ENCODE measurements at regions of chr12 and their contacts with region 1.

Region 1: GRCh38 chr12:56688129-56688845 is at the start of gene PTGES3:
- DNase-seq: peak; percentile 95 to 99 (median 98)
- H3K4me3 ChIP-seq: peak within 1 kb of the TSS; percentile 80
- H3K4me3 Mint-ChIP-seq: peak within 1 kb of the TSS; percentile 93 to 100 (median 100)
- H3K27ac ChIP-seq: peak within 1 kb of the TSS; percentile 99
- H3K27ac Mint-ChIP-seq: peak within 1 kb of the TSS; percentile 96 to 100 (median 100)
- H3K4me1 ChIP-seq: peaks cover 32% of the 10 kb centered on the region
- H3K4me1 Mint-ChIP-seq: peaks cover 29 to 39% (median 36%) of the 10 kb centered on the region in 3 donors
- H3K27me3 ChIP-seq: no peaks in the 10 kb centered on the region
- H3K27me3 Mint-ChIP-seq: no peaks in the 10 kb centered on the region
- total RNA-seq, gene PTGES3: 431 to 437 TPM

Region 2: GRCh38 chr12:56271031-56271430 is 417.3 kb before region 1 on chr12:
- CTCF ChIA-PET with region 1: no interaction called
- POLR2A ChIA-PET with region 1: no interaction called
- DNase-seq: no peak
- H3K4me3 ChIP-seq: no peak overlapping the region
- H3K4me3 Mint-ChIP-seq: peak overlapping the region in 1 of 7 donors; percentile 8
- H3K27ac ChIP-seq: no peak overlapping the region
- H3K27ac Mint-ChIP-seq: peak overlapping the region in 6 of 8 donors; percentile 1 to 78 (median 63)
- H3K4me1 ChIP-seq: peaks cover 12% of the 10 kb centered on the region
- H3K4me1 Mint-ChIP-seq: peaks cover 17 to 18% (median 17%) of the 10 kb centered on the region in 3 donors
- H3K27me3 ChIP-seq: no peaks in the 10 kb centered on the region
- H3K27me3 Mint-ChIP-seq: no peaks in the 10 kb centered on the region

Region 3: GRCh38 chr12:56630160-56630632 is 58.1 kb before region 1 on chr12 and contains the start of gene BAZ2A:
- CTCF ChIA-PET with region 1: interaction called, 43 read pairs
- POLR2A ChIA-PET with region 1: interaction called, 48 read pairs
- DNase-seq: peak; percentile 71 to 86 (median 80)
- H3K4me3 ChIP-seq: peak within 1 kb of the TSS; percentile 89
- H3K4me3 Mint-ChIP-seq: peak within 1 kb of the TSS; percentile 82 to 94 (median 91)
- H3K27ac ChIP-seq: peak within 1 kb of the TSS; percentile 80
- H3K27ac Mint-ChIP-seq: peak within 1 kb of the TSS; percentile 92 to 98 (median 95)
- H3K4me1 ChIP-seq: peaks cover 67% of the 10 kb centered on the region
- H3K4me1 Mint-ChIP-seq: peaks cover 72 to 76% (median 75%) of the 10 kb centered on the region in 3 donors
- H3K27me3 ChIP-seq: no peaks in the 10 kb centered on the region
- H3K27me3 Mint-ChIP-seq: peaks cover 0 to 2% of the 10 kb centered on the region in 2 donors
- total RNA-seq, gene BAZ2A: 87.3 to 89.1 TPM

Region 4: DNA sequence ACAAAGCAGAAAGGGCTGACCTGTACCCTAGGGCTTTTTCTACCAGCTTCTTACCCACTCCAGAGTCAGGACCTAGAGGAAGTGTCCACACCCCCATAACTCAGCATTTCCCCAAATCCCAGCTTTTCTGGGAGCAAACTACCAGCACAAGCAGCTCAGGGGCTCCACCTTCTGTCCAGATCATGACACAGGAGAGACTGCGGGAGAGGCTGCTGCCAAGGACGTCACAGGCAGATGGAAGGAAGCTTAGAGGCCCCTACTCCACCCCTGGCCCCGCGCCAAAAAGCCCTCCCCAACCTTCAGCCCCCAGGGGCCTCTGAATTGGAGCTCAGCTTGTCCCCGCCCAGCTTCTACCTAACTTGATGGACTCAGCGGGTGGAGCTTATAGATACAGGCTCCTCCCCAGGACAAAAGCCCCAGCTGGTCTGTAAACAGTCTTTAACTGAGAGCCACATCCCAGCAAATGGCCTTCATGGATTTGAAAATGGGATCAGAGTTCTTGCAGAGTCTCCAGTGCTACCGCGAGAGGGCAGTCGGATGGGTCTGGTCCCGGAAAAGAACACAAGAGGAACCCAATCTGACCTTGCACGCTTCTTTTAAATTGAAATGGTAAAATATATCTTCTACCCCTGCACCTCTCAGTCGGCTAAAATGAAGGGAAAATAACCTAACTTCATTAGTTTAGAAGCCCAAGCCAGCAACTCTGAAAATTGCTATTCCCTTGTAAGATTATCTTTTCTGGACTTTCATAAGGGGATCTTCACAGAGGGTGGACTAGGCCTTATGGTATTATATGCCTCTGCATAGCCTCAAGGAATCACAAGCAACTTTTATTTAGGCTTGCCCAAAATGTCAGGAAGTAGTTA is 51.4 kb before region 1 on chr12:
- CTCF ChIA-PET with region 1: interaction called, 43 read pairs
- POLR2A ChIA-PET with region 1: interaction called, 48 read pairs
- DNase-seq: peak; percentile 95 to 98 (median 97)
- H3K4me3 ChIP-seq: peak overlapping the region; percentile 91
- H3K4me3 Mint-ChIP-seq: peak overlapping the region; percentile 91 to 99 (median 94)
- H3K27ac ChIP-seq: peak overlapping the region; percentile 89
- H3K27ac Mint-ChIP-seq: peak overlapping the region; percentile 94 to 100 (median 98)
- H3K4me1 ChIP-seq: peaks cover 51% of the 10 kb centered on the region
- H3K4me1 Mint-ChIP-seq: peaks cover 54 to 61% (median 60%) of the 10 kb centered on the region in 3 donors
- H3K27me3 ChIP-seq: no peaks in the 10 kb centered on the region
- H3K27me3 Mint-ChIP-seq: no peaks in the 10 kb centered on the region

Region 5: DNA sequence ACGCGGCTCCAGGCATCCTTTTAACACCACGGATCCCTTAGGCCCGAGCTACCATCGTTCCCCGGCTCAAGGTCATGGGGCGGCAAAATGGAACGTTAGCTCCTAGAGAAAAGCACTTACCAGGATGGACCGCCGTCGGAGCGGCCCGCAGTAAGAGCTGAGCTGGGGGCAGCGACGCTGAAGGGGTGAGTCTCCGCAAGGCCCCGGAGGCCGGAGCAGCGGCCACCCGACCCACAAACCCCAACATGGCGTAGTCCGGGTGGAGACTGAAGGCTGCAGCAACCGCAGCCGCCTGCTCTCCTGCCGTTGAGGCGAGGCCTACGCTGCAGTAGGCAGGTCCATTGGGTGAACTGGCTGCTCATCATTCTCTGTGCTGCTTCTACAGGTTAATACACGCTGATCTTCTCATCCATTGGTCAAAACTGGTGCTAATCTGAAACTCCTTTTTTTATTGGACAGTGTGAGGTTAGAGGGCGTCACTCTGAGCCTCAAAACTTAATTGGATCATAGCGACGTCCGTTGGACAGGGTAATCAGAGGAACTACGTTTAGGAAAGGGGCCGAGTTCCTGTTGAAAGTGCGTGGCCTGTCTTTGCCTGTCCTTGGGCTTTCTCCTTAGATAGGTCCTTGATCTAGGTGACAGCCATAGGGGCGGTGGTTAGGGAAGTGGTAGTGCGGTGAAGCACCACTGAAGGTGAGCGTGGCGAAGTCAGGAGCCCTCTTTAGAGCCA is 42.4 kb before region 1 on chr12 and contains the start of gene ATP5F1B:
- CTCF ChIA-PET with region 1: interaction called, 5 read pairs
- POLR2A ChIA-PET with region 1: interaction called, 23 read pairs
- DNase-seq: peak; percentile 85 to 96 (median 94)
- H3K4me3 ChIP-seq: peak within 1 kb of the TSS; percentile 100
- H3K4me3 Mint-ChIP-seq: peak within 1 kb of the TSS; percentile 79 to 99 (median 93)
- H3K27ac ChIP-seq: peak within 1 kb of the TSS; percentile 98
- H3K27ac Mint-ChIP-seq: peak within 1 kb of the TSS; percentile 76 to 100 (median 98)
- H3K4me1 ChIP-seq: peaks cover 23% of the 10 kb centered on the region
- H3K4me1 Mint-ChIP-seq: peaks cover 28 to 39% (median 39%) of the 10 kb centered on the region in 3 donors
- H3K27me3 ChIP-seq: no peaks in the 10 kb centered on the region
- H3K27me3 Mint-ChIP-seq: no peaks in the 10 kb centered on the region
- total RNA-seq, gene ATP5F1B: 925 to 960 TPM

Region 6: DNA sequence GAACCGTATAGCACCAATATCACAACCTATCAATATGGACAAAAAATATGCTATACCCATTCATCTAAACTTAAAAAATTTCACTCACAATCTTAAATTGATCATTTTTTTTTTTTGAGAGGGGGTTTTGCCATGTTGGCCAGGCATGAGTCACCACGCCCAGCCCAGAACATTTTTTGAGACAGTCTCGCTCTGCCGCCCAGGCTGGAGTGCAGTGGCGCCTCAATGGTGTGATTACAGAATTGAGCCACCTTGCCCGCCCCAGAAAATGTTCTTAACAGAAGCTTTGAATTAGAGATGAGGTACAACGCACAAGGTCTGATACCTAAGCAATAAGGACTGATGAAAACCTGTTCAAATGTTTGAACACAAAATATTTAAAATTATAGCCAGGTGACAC is 26.7 kb before region 1 on chr12:
- CTCF ChIA-PET with region 1: interaction called, 4 read pairs
- POLR2A ChIA-PET with region 1: interaction called, 24 read pairs
- DNase-seq: no peak
- H3K4me3 ChIP-seq: no peak overlapping the region
- H3K4me3 Mint-ChIP-seq: no peak overlapping the region
- H3K27ac ChIP-seq: no peak overlapping the region
- H3K27ac Mint-ChIP-seq: peak overlapping the region in 3 of 8 donors; percentile 9 to 56 (median 50)
- H3K4me1 ChIP-seq: no peaks in the 10 kb centered on the region
- H3K4me1 Mint-ChIP-seq: peaks cover 3 to 17% (median 4%) of the 10 kb centered on the region in 3 donors
- H3K27me3 ChIP-seq: no peaks in the 10 kb centered on the region
- H3K27me3 Mint-ChIP-seq: no peaks in the 10 kb centered on the region

Region 7: GRCh38 chr12:56677680-56678079 is 10.6 kb before region 1 on chr12:
- CTCF ChIA-PET with region 1: interaction called, 7 read pairs
- POLR2A ChIA-PET with region 1: interaction called, 17 read pairs
- DNase-seq: no peak
- H3K4me3 ChIP-seq: no peak overlapping the region
- H3K4me3 Mint-ChIP-seq: peak overlapping the region in 4 of 7 donors; percentile 3 to 33 (median 25)
- H3K27ac ChIP-seq: peak overlapping the region; percentile 24
- H3K27ac Mint-ChIP-seq: peak overlapping the region; percentile 54 to 96 (median 66)
- H3K4me1 ChIP-seq: peaks cover 65% of the 10 kb centered on the region
- H3K4me1 Mint-ChIP-seq: peaks cover 57 to 83% (median 72%) of the 10 kb centered on the region in 3 donors
- H3K27me3 ChIP-seq: no peaks in the 10 kb centered on the region
- H3K27me3 Mint-ChIP-seq: no peaks in the 10 kb centered on the region

Region 8: GRCh38 chr12:56724972-56725722 is 36.9 kb after region 1 on chr12 and contains the start of gene NACA:
- CTCF ChIA-PET with region 1: interaction called, 11 read pairs
- POLR2A ChIA-PET with region 1: interaction called, 56 read pairs
- DNase-seq: peak; percentile 96 to 98 (median 97)
- H3K4me3 ChIP-seq: peak within 1 kb of the TSS; percentile 96
- H3K4me3 Mint-ChIP-seq: peak within 1 kb of the TSS; percentile 89 to 99 (median 98)
- H3K27ac ChIP-seq: peak within 1 kb of the TSS; percentile 79
- H3K27ac Mint-ChIP-seq: peak within 1 kb of the TSS; percentile 85 to 98 (median 96)
- H3K4me1 ChIP-seq: peaks cover 49% of the 10 kb centered on the region
- H3K4me1 Mint-ChIP-seq: peaks cover 56 to 58% (median 57%) of the 10 kb centered on the region in 3 donors
- H3K27me3 ChIP-seq: no peaks in the 10 kb centered on the region
- H3K27me3 Mint-ChIP-seq: no peaks in the 10 kb centered on the region
- total RNA-seq, gene NACA: 957 to 1,017 TPM